ENCODE measurements at regions of chr9 and their contacts with region 1.

Region 1: GRCh38 chr9:111759762-111760639 is 34.7 kb downstream of the SHOC1 start:
- DNase-seq: peak; percentile 17 to 83 (median 35)
- ATAC-seq: peak; percentile 95
- H3K4me3 ChIP-seq: no peak overlapping the region
- H3K27ac ChIP-seq: peak overlapping the region; percentile 4; the same call in 1 of the 3 replicates
- H3K4me1 ChIP-seq: no peaks in the 10 kb centered on the region
- H3K27me3 ChIP-seq: no peaks in the 10 kb centered on the region
- CTCF ChIP-seq: peak; percentile 58 to 82 (median 64); a peak in 5 of 6 replicates
- EP300 ChIP-seq: 0 out of 2 replicates have a peak, but pooled peaks have one; percentile 6
- POLR2A ChIP-seq: no peak
- RAD21 ChIP-seq: peak; percentile 95 to 97

Region 2: GRCh38 chr9:111715471-111715870 is 44.5 kb before region 1 on chr9:
- CTCF ChIA-PET with region 1: no interaction called
- POLR2A ChIA-PET with region 1: no interaction called
- in situ Hi-C with region 1: no loop called
- intact Hi-C with region 1: no loop called
- DNase-seq: no peak
- ATAC-seq: no peak
- H3K4me3 ChIP-seq: no peak overlapping the region
- H3K27ac ChIP-seq: no peak overlapping the region
- H3K4me1 ChIP-seq: no peaks in the 10 kb centered on the region
- H3K27me3 ChIP-seq: no peaks in the 10 kb centered on the region
- CTCF ChIP-seq: no peak
- EP300 ChIP-seq: no peak
- POLR2A ChIP-seq: no peak
- RAD21 ChIP-seq: no peak

Region 3: GRCh38 chr9:111783857-111784256 is 23.9 kb after region 1 on chr9:
- CTCF ChIA-PET with region 1: no interaction called
- POLR2A ChIA-PET with region 1: no interaction called
- in situ Hi-C with region 1: no loop called
- intact Hi-C with region 1: no loop called
- DNase-seq: no peak
- ATAC-seq: no peak
- H3K4me3 ChIP-seq: no peak overlapping the region
- H3K27ac ChIP-seq: no peak overlapping the region
- H3K4me1 ChIP-seq: no peaks in the 10 kb centered on the region
- H3K27me3 ChIP-seq: no peaks in the 10 kb centered on the region
- CTCF ChIP-seq: no peak
- EP300 ChIP-seq: no peak
- POLR2A ChIP-seq: no peak
- RAD21 ChIP-seq: no peak

Region 4: GRCh38 chr9:111828193-111828592 is 68.2 kb after region 1 on chr9:
- CTCF ChIA-PET with region 1: no interaction called
- POLR2A ChIA-PET with region 1: no interaction called
- in situ Hi-C with region 1: no loop called
- intact Hi-C with region 1: loop called (anchors 5 kb)
- DNase-seq: peak in 1 of 4 experiments; percentile 10
- ATAC-seq: peak; percentile 48; the same call in 2 of the 3 replicates
- H3K4me3 ChIP-seq: no peak overlapping the region
- H3K27ac ChIP-seq: no peak overlapping the region
- H3K4me1 ChIP-seq: no peaks in the 10 kb centered on the region
- H3K27me3 ChIP-seq: peaks cover 0 to 7% of the 10 kb centered on the region in 2 experiments; a peak in 3 of 5 replicates
- CTCF ChIP-seq: peak; percentile 8 to 46 (median 26); a peak in 3 of 6 replicates
- EP300 ChIP-seq: no peak
- POLR2A ChIP-seq: no peak
- RAD21 ChIP-seq: peak; percentile 43 to 59

Region 5: DNA sequence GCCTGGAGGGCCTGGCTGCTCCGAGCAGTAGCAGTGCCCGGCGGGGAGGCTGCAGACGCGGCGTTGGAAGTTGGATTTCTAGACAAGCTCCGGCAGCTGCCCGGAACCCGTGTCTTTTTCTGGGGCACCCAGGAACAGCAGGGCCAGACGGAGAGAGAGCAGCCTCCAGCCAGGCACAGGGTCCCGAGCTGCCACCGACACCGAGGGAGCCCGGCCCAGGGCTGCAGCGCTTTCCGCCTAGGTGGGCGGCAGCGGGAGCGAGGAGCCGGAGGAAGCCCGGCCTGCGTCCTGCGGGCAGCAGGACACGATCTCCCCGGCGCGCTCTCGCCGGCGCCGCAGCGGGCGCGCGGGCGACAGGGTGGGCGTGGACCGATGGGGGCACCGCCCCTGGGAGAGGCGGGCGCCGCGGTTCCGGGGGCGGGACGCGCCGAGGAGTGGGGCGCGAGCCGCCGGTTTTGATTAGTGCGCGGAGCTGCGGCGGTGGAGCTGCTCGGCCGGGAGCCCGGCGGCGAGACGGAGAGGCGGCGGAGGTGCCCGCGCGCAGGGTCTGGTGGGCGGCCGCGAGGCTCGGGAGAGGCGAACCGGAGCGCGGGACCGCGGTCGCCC is 136.5 kb after region 1 on chr9 and contains the start of gene UGCG:
- CTCF ChIA-PET with region 1: no interaction called
- POLR2A ChIA-PET with region 1: no interaction called
- in situ Hi-C with region 1: no loop called
- intact Hi-C with region 1: loop called (anchors 5 kb)
- DNase-seq: peak; percentile 92 to 94 (median 94)
- ATAC-seq: peak; percentile 83
- H3K4me3 ChIP-seq: peak within 1 kb of the TSS; percentile 78
- H3K27ac ChIP-seq: peak within 1 kb of the TSS; percentile 80
- H3K4me1 ChIP-seq: peaks cover 14 to 21% of the 10 kb centered on the region in 2 experiments; a peak in 4 of 5 replicates
- H3K27me3 ChIP-seq: no peaks in the 10 kb centered on the region
- CTCF ChIP-seq: no peak
- EP300 ChIP-seq: no peak
- POLR2A ChIP-seq: peak; percentile 93
- RAD21 ChIP-seq: no peak; a peak in 1 of 4 replicates
- polyA plus RNA-seq, gene UGCG: 29.2 to 31.9 TPM

Region 6: GRCh38 chr9:111975709-111976108 is 215.7 kb after region 1 on chr9:
- CTCF ChIA-PET with region 1: no interaction called
- POLR2A ChIA-PET with region 1: no interaction called
- in situ Hi-C with region 1: no loop called
- intact Hi-C with region 1: loop called (anchors 1 kb)
- DNase-seq: peak in 1 of 4 experiments; percentile 34
- ATAC-seq: peak; percentile 73
- H3K4me3 ChIP-seq: no peak overlapping the region
- H3K27ac ChIP-seq: no peak overlapping the region
- H3K4me1 ChIP-seq: peaks cover 5 to 14% of the 10 kb centered on the region in 2 experiments; a peak in 4 of 5 replicates
- H3K27me3 ChIP-seq: no peaks in the 10 kb centered on the region
- CTCF ChIP-seq: peak; percentile 25 to 41 (median 35); a peak in 3 of 6 replicates
- EP300 ChIP-seq: no peak
- POLR2A ChIP-seq: no peak
- RAD21 ChIP-seq: peak in 1 of 2 experiments; percentile 66; a peak in 2 of 4 replicates

Region 7: DNA sequence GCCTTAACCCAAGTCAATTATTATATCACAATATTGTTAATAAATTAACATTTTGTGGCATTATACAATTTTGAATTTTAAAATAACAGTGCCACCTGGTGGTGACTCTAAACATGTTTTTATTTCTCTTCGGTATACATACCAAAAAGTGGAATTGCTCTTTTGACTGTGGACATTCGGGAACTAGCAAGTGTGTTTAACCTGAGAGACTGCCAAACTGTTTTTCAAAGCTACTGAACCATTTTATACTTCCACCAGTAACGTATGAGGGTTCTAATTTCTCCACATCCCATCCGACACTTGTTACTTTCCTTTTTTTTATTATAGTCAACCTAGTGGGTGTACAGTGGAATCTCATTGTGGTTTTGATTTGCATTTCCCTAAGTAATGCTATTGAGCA is 601.6 kb after region 1 on chr9:
- CTCF ChIA-PET with region 1: interaction called, 7 read pairs
- POLR2A ChIA-PET with region 1: no interaction called
- in situ Hi-C with region 1: loop called (anchors 5 kb)
- intact Hi-C with region 1: loop called (anchors 1 kb)
- DNase-seq: peak in 2 of 4 experiments; percentile 18 to 59
- ATAC-seq: peak; percentile 80
- H3K4me3 ChIP-seq: no peak overlapping the region
- H3K27ac ChIP-seq: no peak overlapping the region
- H3K4me1 ChIP-seq: no peaks in the 10 kb centered on the region
- H3K27me3 ChIP-seq: no peaks in the 10 kb centered on the region
- CTCF ChIP-seq: peak; percentile 34 to 72 (median 36); a peak in 3 of 6 replicates
- EP300 ChIP-seq: no peak
- POLR2A ChIP-seq: no peak
- RAD21 ChIP-seq: peak; percentile 68 to 88

Measured in K562 (cell line).